Naive thymus-derived CD4-positive, alpha-beta T cell (primary cell): ENCODE measurements at regions of chr10 and their contacts with region 1.

Region 1: DNA sequence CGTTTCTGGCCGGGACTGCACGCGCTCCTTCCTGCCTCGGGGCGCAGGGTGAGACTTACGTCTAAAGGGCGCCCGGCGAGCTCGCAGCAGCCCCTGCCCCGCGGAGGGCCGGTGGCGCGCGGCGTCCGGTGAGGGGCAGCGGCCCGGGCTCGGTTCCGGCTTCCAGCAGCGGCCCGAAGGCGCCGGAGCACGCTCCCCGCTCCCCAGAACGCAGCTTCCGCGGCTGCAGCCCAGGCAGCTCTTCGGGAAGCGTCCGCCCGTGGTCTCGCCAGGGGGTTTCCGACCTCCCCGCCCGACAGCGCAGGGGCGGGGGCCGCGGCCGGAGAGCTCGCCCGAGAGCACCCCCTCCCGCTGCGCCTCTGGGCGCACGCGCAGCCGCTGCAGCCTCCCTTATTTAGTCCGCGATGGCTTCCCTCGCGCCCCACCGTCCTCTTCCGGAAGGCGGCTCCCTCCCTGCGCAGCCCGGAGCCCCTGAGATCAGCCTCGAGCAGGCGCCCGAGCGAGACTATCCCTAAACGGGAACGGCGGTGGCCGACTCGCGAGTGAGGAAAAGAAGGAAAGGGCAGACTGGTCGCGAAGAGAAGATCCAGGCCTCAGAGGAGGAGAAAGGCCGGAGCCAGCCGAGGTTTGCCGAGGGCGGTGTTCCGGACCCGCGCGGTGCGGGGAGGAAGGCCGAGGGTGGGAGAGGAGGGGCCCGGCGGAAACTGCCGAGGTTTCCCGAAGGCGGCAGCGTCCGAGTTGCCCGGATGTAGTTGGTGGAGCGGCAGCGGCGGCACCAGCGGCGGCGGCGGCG is at the start of gene WAC:
- DNase-seq: peak; percentile 93 to 99 (median 97)
- ATAC-seq: peak; percentile 89
- H3K4me3 ChIP-seq: peak within 1 kb of the TSS; percentile 94
- H3K4me3 Mint-ChIP-seq: peak within 1 kb of the TSS; percentile 97 to 99 (median 99)
- H3K27ac ChIP-seq: peak within 1 kb of the TSS; percentile 98
- H3K27ac Mint-ChIP-seq: peak within 1 kb of the TSS; percentile 99 to 100 (median 100)
- H3K4me1 ChIP-seq: peaks cover 25 to 34% of the 10 kb centered on the region in 2 donors
- H3K4me1 Mint-ChIP-seq: peaks cover 43 to 78% (median 71%) of the 10 kb centered on the region in 7 donors
- H3K27me3 ChIP-seq: no peaks in the 10 kb centered on the region
- H3K27me3 Mint-ChIP-seq: peaks cover 0 to 2% (median 0%) of the 10 kb centered on the region in 5 donors
- total RNA-seq, gene WAC: 143 to 184 (median 179) TPM

Region 2: GRCh38 chr10:27241652-27242472 is 1290.7 kb before region 1 on chr10:
- CTCF ChIA-PET with region 1: no interaction called
- POLR2A ChIA-PET with region 1: no interaction called
- intact Hi-C with region 1: loop called in 1 of 2 experiments (anchors 2 kb)
- DNase-seq: peak; percentile 79 to 89 (median 85)
- ATAC-seq: peak; percentile 82
- H3K4me3 ChIP-seq: peak overlapping the region; percentile 80
- H3K4me3 Mint-ChIP-seq: peak overlapping the region; percentile 91 to 99 (median 98)
- H3K27ac ChIP-seq: peak overlapping the region; percentile 93
- H3K27ac Mint-ChIP-seq: peak overlapping the region; percentile 93 to 100 (median 97)
- H3K4me1 ChIP-seq: peaks cover 8 to 21% of the 10 kb centered on the region in 2 donors
- H3K4me1 Mint-ChIP-seq: peaks cover 17 to 35% (median 34%) of the 10 kb centered on the region in 7 donors
- H3K27me3 ChIP-seq: no peaks in the 10 kb centered on the region
- H3K27me3 Mint-ChIP-seq: peaks cover 0 to 5% (median 0%) of the 10 kb centered on the region in 5 donors

Region 3: GRCh38 chr10:27699776-27700175 is 832.8 kb before region 1 on chr10:
- CTCF ChIA-PET with region 1: no interaction called
- POLR2A ChIA-PET with region 1: no interaction called
- intact Hi-C with region 1: no loop called
- DNase-seq: no peak
- ATAC-seq: no peak
- H3K4me3 ChIP-seq: no peak overlapping the region
- H3K4me3 Mint-ChIP-seq: no peak overlapping the region
- H3K27ac ChIP-seq: no peak overlapping the region
- H3K27ac Mint-ChIP-seq: no peak overlapping the region
- H3K4me1 ChIP-seq: no peaks in the 10 kb centered on the region
- H3K4me1 Mint-ChIP-seq: no peaks in the 10 kb centered on the region
- H3K27me3 ChIP-seq: no peaks in the 10 kb centered on the region
- H3K27me3 Mint-ChIP-seq: peaks cover 12 to 34% (median 18%) of the 10 kb centered on the region in 5 donors

Region 4: DNA sequence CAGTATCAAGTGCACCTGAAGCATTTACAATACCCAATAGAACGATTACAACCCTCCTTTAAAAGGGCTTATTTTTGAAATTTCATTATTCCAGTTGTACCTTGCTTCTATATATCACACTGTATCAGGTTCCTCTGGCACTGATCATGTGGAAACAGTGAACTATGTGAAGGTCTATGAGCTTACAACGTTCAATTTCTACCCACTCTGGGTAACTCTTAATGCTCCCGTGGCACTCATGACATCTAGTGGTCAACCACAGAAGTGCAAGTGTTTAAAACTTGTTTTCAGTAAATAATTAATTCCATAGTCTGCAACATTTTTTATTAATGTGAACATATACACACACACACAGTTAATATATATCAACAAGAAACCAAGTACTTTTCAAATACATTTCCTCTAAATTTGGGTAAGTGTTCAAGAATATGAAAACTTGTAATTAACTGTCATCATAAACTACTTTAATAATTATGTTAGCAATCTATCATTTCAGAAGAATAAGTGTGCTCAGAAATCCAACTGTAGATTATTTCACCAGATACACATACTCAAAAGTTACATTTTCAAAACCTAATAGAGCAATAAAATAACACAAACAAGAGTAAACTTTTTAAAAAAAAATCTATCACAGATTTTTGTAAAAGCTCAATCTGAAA is 290.7 kb before region 1 on chr10:
- CTCF ChIA-PET with region 1: no interaction called
- POLR2A ChIA-PET with region 1: interaction called, 3 read pairs
- intact Hi-C with region 1: loop called in 1 of 2 experiments (anchors 5 kb)
- DNase-seq: peak in 7 of 9 donors; percentile 16 to 54 (median 43)
- ATAC-seq: peak; percentile 90
- H3K4me3 ChIP-seq: no peak overlapping the region
- H3K4me3 Mint-ChIP-seq: no peak overlapping the region
- H3K27ac ChIP-seq: no peak overlapping the region
- H3K27ac Mint-ChIP-seq: no peak overlapping the region
- H3K4me1 ChIP-seq: peaks cover 0 to 12% of the 10 kb centered on the region in 2 donors
- H3K4me1 Mint-ChIP-seq: peaks cover 5 to 59% (median 39%) of the 10 kb centered on the region in 7 donors
- H3K27me3 ChIP-seq: no peaks in the 10 kb centered on the region
- H3K27me3 Mint-ChIP-seq: peaks cover 0 to 12% (median 0%) of the 10 kb centered on the region in 5 donors

Region 5: DNA sequence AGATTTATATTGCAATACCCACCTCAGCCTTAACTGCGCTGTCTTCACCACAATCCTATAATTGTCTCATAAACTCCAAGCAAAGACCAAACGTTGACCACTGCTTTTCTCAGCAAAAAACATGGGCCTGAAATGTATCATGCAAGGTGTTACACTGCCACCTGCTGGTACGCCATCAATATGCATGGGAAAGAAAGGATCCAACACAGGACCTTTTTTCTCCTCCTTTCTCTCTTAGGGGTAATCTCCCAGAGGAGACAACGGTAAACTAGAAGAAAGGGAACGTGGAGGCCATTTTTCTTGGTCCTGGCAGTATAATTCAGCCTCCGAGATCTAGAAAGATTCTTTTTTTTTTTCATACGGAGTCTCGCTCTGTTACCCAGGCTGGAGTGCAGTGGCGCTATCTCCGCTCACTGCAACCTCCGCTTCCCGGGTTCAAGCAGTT is 150.7 kb before region 1 on chr10:
- CTCF ChIA-PET with region 1: no interaction called
- POLR2A ChIA-PET with region 1: no interaction called
- intact Hi-C with region 1: loop called in 1 of 2 experiments (anchors 5 kb)
- DNase-seq: peak; percentile 55 to 82 (median 76)
- ATAC-seq: peak; percentile 98
- H3K4me3 ChIP-seq: no peak overlapping the region
- H3K4me3 Mint-ChIP-seq: peak overlapping the region in 4 of 10 donors; percentile 20 to 72 (median 34)
- H3K27ac ChIP-seq: no peak overlapping the region
- H3K27ac Mint-ChIP-seq: peak overlapping the region; percentile 30 to 93 (median 70)
- H3K4me1 ChIP-seq: peaks cover 0 to 20% of the 10 kb centered on the region in 2 donors
- H3K4me1 Mint-ChIP-seq: peaks cover 17 to 49% (median 43%) of the 10 kb centered on the region in 7 donors
- H3K27me3 ChIP-seq: no peaks in the 10 kb centered on the region
- H3K27me3 Mint-ChIP-seq: peaks cover 0 to 11% (median 0%) of the 10 kb centered on the region in 5 donors

Region 6: GRCh38 chr10:28587970-28588290 is 55.4 kb after region 1 on chr10:
- CTCF ChIA-PET with region 1: no interaction called
- POLR2A ChIA-PET with region 1: no interaction called
- intact Hi-C with region 1: loop called in 1 of 2 experiments (anchors 5 kb)
- DNase-seq: no peak
- ATAC-seq: no peak
- H3K4me3 ChIP-seq: no peak overlapping the region
- H3K4me3 Mint-ChIP-seq: no peak overlapping the region
- H3K27ac ChIP-seq: no peak overlapping the region
- H3K27ac Mint-ChIP-seq: peak overlapping the region in 2 of 9 donors; percentile 44 to 71
- H3K4me1 ChIP-seq: peaks cover 0 to 6% of the 10 kb centered on the region in 2 donors
- H3K4me1 Mint-ChIP-seq: peaks cover 17 to 62% (median 52%) of the 10 kb centered on the region in 7 donors
- H3K27me3 ChIP-seq: no peaks in the 10 kb centered on the region
- H3K27me3 Mint-ChIP-seq: no peaks in the 10 kb centered on the region

Region 7: DNA sequence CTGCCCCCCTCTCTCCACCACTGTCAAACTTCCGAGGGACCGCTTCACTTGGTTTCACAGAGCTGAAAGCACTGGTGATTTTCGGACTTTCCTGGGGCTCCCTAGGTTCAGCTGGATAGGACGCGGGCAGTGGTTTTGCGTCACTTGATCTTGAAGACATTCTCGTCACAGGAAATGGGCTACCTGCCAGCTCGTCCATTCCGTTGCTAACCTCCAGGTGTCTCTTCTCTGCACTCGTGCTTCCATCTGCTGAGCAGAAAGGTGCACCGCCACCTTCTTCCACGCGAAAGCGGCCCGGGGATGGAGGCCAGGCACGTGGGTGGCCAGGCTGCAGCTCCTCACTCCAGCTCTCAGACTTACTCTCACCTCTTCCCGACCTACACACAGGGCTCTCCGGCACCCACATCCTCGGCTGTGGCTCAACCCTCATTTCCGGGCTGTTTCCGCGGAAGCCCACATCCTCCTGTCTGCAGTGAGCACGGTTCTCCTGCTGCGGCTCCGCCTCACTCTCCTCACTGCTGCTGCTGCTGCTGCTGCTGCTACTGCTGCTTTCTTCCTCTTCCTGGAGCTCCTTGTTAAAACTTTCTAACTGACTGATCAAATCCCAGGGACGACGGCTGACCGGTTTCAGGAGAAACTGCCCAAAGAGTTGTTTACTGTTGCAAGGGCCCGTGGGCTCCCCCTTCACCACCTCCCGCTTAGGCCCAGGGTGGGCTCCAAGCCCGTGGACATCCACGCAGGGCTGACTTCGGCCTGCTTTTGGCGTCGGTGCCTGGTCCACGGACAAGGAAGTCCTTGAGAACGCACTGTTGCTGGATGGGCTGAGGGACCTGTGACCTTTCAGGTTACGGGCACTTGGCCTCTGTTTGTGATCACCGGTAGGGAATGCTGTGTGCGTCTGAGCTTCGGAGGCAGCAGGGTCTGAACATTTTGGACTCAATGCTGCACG is 1494.8 kb after region 1 on chr10:
- CTCF ChIA-PET with region 1: no interaction called
- POLR2A ChIA-PET with region 1: no interaction called
- intact Hi-C with region 1: loop called in 1 of 2 experiments (anchors 2 kb)
- DNase-seq: peak; percentile 63 to 98 (median 95)
- ATAC-seq: peak; percentile 97
- H3K4me3 ChIP-seq: peak overlapping the region; percentile 50
- H3K4me3 Mint-ChIP-seq: peak overlapping the region; percentile 63 to 94 (median 82)
- H3K27ac ChIP-seq: no peak overlapping the region
- H3K27ac Mint-ChIP-seq: peak overlapping the region; percentile 75 to 98 (median 93)
- H3K4me1 ChIP-seq: peaks cover 27 to 29% of the 10 kb centered on the region in 2 donors
- H3K4me1 Mint-ChIP-seq: peaks cover 24 to 58% (median 40%) of the 10 kb centered on the region in 7 donors
- H3K27me3 ChIP-seq: peaks cover 8% of the 10 kb centered on the region in 2 donors
- H3K27me3 Mint-ChIP-seq: peaks cover 34 to 65% (median 53%) of the 10 kb centered on the region in 5 donors